ENCODE measurements at regions of chr5 and their contacts with region 1.

Region 1: DNA sequence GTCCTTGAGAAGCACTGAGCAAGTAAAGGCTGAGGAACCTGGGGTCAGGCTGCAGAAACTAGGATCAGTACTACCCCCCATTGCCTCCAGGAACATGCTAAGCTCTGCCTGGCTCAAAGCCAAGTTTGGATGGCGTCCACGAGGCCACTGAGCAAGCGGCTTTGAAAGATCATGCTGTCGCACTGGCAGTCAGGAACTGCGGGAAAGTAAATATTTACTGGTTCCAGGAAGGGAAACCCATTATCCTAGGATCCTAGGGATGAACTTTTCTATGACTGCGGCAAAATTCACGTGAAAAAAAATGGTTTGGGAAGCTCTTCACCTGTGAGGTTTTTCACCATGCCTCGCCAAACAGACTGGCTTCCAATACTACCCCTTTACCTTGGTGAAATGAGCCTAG is 75.3 kb upstream of the PJA2 start:
- DNase-seq: peak; percentile 47
- H3K4me3 ChIP-seq: no peak overlapping the region
- H3K27ac ChIP-seq: no peak overlapping the region
- H3K4me1 ChIP-seq: no peaks in the 10 kb centered on the region
- H3K27me3 ChIP-seq: peaks cover 2% of the 10 kb centered on the region in 2 experiments
- CTCF ChIP-seq: no peak
- POLR2A ChIP-seq: no peak

Region 2: GRCh38 chr5:109844148-109844547 is 359.1 kb after region 1 on chr5:
- CTCF ChIA-PET with region 1: no interaction called
- POLR2A ChIA-PET with region 1: no interaction called
- dilution Hi-C with region 1: no loop called
- intact Hi-C with region 1: loop called (anchors 10 kb)
- DNase-seq: no peak
- H3K4me3 ChIP-seq: no peak overlapping the region
- H3K27ac ChIP-seq: no peak overlapping the region
- H3K4me1 ChIP-seq: peaks cover 2% of the 10 kb centered on the region
- H3K27me3 ChIP-seq: no peaks in the 10 kb centered on the region
- CTCF ChIP-seq: peak in 1 of 2 donors; percentile 16
- POLR2A ChIP-seq: no peak